ENCODE measurements at regions of chr2 and their contacts with region 1.

Region 1: GRCh38 chr2:119795309-119796303 is 35.9 kb downstream of the PTPN4 start:
- DNase-seq: peak in 1 of 2 experiments; percentile 59
- H3K4me3 ChIP-seq: 0 out of 8 replicates have a peak overlapping the region, but pooled peaks of 1 of the 4 experiments have one; percentile 2
- H3K27ac ChIP-seq: peak overlapping the region; percentile 95
- H3K4me1 ChIP-seq: peaks cover 16 to 44% (median 21%) of the 10 kb centered on the region in 4 experiments
- H3K27me3 ChIP-seq: no peaks in the 10 kb centered on the region
- CTCF ChIP-seq: no peak
- EP300 ChIP-seq: no peak
- POLR2A ChIP-seq: peak in 1 of 2 experiments; percentile 53; a peak in 1 of 3 replicates
- RAD21 ChIP-seq: no peak

Region 2: DNA sequence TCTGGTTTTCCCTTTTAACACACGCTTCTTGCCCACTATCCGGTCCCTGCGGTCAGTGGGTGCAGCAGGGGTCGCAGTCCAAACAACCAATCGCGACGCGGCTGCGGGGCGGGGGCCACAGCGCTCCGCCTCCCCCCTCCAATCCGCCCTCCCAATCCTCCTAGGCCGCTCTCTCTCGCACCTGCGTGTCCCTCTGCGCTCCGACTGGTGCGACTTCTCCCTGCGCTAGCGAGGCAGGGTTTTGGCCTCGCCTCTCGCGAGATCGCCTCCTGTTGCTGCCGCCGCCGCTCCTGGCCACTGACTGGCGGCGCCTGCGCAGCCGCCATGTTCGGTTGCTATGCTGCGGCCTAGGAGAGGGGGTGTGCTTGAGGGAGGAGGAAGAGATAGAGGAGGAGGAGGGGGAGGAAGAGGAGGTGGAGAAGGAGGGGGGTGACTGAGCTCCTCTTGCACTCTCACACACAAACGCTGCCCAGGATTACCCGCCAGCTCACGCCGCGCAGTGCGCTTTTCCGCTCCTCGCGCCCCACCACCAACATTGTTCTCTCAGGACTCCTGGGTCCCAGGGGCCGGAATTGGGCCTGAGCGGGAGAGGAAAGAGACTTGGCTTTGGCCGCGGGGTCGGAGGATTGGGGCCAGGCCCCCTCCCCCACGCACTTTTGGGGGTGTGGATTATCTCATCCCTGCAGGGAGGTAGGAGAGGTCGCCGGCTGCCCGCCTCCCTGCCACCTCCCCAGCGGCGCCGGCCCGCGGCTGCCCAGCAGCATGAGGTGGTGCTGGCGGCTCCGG is 36.0 kb before region 1 on chr2 and contains the start of gene PTPN4:
- CTCF ChIA-PET with region 1: interaction called, 4 read pairs
- POLR2A ChIA-PET with region 1: interaction called, 24 read pairs
- DNase-seq: peak; percentile 94 to 99
- H3K4me3 ChIP-seq: peak within 1 kb of the TSS; percentile 78 to 93 (median 90)
- H3K27ac ChIP-seq: peak within 1 kb of the TSS; percentile 96
- H3K4me1 ChIP-seq: peaks cover 3 to 8% (median 5%) of the 10 kb centered on the region in 4 experiments; a peak in 5 of 7 replicates
- H3K27me3 ChIP-seq: no peaks in the 10 kb centered on the region
- CTCF ChIP-seq: peak in 1 of 3 experiments; percentile 1; a peak in 1 of 4 replicates
- EP300 ChIP-seq: no peak; a peak in 1 of 3 replicates
- POLR2A ChIP-seq: peak; percentile 98 to 99
- RAD21 ChIP-seq: peak; percentile 3 to 7; a peak in 2 of 4 replicates
- total RNA-seq, gene PTPN4: 105 and 107 TPM in 2 replicates

Region 3: GRCh38 chr2:119846020-119846419 is 50.4 kb after region 1 on chr2:
- CTCF ChIA-PET with region 1: no interaction called
- POLR2A ChIA-PET with region 1: no interaction called
- DNase-seq: no peak
- H3K4me3 ChIP-seq: no peak overlapping the region
- H3K27ac ChIP-seq: no peak overlapping the region
- H3K4me1 ChIP-seq: peaks cover 0 to 7% (median 2%) of the 10 kb centered on the region in 4 experiments; a peak in 5 of 7 replicates
- H3K27me3 ChIP-seq: no peaks in the 10 kb centered on the region
- CTCF ChIP-seq: no peak
- EP300 ChIP-seq: no peak
- POLR2A ChIP-seq: no peak
- RAD21 ChIP-seq: no peak

Region 4: DNA sequence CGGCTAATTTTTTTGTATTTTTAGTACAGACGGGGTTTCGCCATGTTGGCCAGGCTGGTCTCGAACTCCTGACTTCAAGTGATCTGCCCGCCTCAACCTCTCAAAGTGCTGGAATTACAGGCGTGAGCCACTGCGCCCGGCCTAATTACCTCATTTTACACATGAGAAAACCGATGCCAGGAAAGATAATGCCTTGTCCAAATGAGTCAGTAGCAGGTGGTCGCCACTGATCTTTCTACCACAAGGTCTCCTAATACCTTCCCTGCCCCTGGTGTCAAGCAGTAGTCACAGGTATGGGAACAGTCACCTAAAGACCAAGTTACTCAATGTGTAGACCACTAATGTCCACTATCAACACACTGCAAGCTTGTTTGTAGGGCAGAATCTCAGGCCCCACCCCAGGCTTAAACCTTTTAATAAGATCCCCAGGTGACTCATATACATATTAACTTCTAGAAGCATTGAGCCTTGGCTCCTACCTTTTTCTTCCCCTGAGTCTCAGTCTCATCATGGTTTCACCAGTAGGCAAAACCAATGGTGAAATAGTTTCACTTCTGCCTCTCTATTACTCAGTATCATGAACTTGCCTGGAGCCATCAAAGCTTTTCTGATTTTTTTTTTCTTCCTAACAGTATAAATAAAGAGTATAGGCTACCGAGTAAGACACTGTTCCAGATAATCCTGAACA is 210.4 kb after region 1 on chr2:
- CTCF ChIA-PET with region 1: no interaction called
- POLR2A ChIA-PET with region 1: no interaction called
- DNase-seq: no peak
- H3K4me3 ChIP-seq: no peak overlapping the region
- H3K27ac ChIP-seq: no peak overlapping the region
- H3K4me1 ChIP-seq: no peaks in the 10 kb centered on the region
- H3K27me3 ChIP-seq: no peaks in the 10 kb centered on the region
- CTCF ChIP-seq: no peak
- EP300 ChIP-seq: no peak
- POLR2A ChIP-seq: no peak
- RAD21 ChIP-seq: no peak

Measured in H1 (cell line).